Dorsolateral prefrontal cortex (tissue), 120 donors: ENCODE measurements at regions of chr3 and their contacts with region 1.

Region 1: GRCh38 chr3:142224482-142225072 is 808 bp downstream of the GK5 start:
- DNase-seq: no peak
- H3K4me3 ChIP-seq: peak overlapping the region; percentile 58 to 95 (median 84)
- H3K27ac ChIP-seq: peak overlapping the region in 50 of 59 donors; percentile 18 to 93 (median 82)
- H3K27me3 ChIP-seq: no peaks in the 10 kb centered on the region
- CTCF ChIP-seq: no peak

Region 2: GRCh38 chr3:142148792-142149672 is 75.5 kb before region 1 on chr3 and contains the start of gene TFDP2:
- intact Hi-C with region 1: loop called in 1 of 2 experiments (anchors 10 kb)
- DNase-seq: peak; percentile 81 to 96 (median 90)
- H3K4me3 ChIP-seq: peak within 1 kb of the TSS; percentile 58 to 96 (median 84)
- H3K27ac ChIP-seq: peak within 1 kb of the TSS in 54 of 59 donors; percentile 2 to 91 (median 72)
- H3K27me3 ChIP-seq: no peaks in the 10 kb centered on the region
- CTCF ChIP-seq: peak in 33 of 56 donors; percentile 6 to 50 (median 22)
- total RNA-seq, gene TFDP2: 32.6 to 102 (median 54.8) TPM

Region 3: DNA sequence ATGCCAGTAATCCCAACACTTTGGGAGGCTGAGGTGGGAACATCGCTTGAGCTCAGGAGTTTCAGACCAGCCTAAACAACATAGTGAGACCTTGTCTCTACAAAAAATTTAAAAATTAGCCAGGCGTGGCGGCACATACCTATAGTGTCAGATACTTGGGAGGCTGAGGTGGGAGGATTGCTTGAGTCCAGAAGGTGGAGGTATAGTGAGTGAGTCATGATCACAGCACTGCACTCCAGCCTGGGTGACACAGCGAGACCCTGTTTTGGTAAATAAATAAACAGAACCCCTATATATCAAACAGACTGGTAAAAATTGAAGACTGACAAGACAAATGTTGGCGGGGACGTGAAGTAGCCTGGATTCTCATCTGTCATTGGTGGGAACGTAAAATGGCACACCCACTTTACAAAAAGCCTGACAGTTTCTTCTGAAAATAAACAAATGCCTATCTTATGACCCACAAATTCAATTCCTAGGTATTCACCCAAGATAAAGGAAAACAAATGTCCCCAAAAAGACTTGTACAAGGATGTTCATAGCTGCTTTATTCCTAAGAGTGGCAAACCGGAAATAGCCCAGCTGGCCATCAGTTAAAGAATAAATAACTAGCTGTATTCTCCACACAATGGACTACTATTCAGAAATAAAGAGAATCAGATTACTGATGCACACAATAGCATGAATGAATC is 47.8 kb after region 1 on chr3:
- intact Hi-C with region 1: loop called in 1 of 2 experiments (anchors 2 kb)
- DNase-seq: peak in 2 of 10 donors; percentile 36 to 39
- H3K4me3 ChIP-seq: peak overlapping the region in 10 of 59 donors; percentile 1 to 26 (median 8)
- H3K27ac ChIP-seq: peak overlapping the region in 40 of 59 donors; percentile 0 to 82 (median 72)
- H3K27me3 ChIP-seq: no peaks in the 10 kb centered on the region
- CTCF ChIP-seq: peak in 4 of 56 donors; percentile 3 to 27 (median 12)

Region 4: DNA sequence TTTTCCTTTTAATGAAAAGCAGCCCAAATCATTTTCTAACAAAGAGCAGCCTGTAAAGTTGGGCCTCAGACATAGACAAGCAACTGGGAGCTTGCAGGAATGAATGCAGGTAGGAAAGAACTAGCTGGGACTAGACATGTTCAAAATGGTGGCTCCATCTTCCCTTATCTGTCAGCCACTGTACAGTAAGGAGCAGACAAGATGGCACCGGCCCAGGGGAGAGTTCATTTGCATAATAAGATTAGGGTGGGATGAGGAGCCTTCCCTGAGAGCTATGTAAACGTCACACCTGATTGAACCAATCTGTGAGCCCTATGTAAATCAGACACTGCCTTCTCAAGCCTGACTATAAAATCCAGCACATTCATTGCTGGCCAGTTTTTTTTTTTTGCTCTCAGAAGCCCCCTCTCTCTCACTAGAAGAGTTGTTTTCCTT is 60.5 kb after region 1 on chr3:
- intact Hi-C with region 1: no loop called
- DNase-seq: no peak
- H3K4me3 ChIP-seq: no peak overlapping the region
- H3K27ac ChIP-seq: no peak overlapping the region
- H3K27me3 ChIP-seq: no peaks in the 10 kb centered on the region
- CTCF ChIP-seq: no peak

Region 5: GRCh38 chr3:142447852-142448823 is 223.6 kb after region 1 on chr3 and contains the start of gene XRN1:
- intact Hi-C with region 1: loop called in 1 of 2 experiments (anchors 10 kb)
- DNase-seq: peak; percentile 82 to 95 (median 91)
- H3K4me3 ChIP-seq: peak within 1 kb of the TSS; percentile 74 to 100 (median 94)
- H3K27ac ChIP-seq: peak within 1 kb of the TSS; percentile 35 to 97 (median 91)
- H3K27me3 ChIP-seq: no peaks in the 10 kb centered on the region
- CTCF ChIP-seq: peak in 27 of 56 donors; percentile 6 to 42 (median 20)
- total RNA-seq, gene XRN1: 27.4 to 83.1 (median 53.9) TPM